ENCODE measurements at regions of chr5 and their contacts with region 1.

Region 1: DNA sequence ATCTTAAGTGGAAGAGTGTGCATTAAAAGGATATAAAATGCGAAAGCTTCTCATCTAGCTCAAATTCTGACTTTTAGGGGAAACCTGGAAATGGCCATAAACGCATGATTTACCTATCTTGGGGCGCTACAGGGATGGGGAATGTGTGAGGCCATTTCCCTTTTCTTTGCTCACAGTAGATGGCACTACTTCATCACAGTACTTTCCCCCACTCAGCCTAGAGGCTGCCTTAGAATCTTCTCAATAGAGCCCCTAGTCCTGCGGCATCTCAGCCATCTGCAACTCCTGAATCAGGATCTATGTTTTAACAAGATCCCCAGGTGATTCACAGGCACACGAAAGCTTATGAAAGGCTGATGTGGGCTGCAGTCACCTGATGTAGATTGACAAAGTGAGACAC is 110.8 kb downstream of the LHFPL2 start:
- DNase-seq: peak; percentile 25 to 60 (median 44)
- ATAC-seq: peak; percentile 90
- H3K4me3 ChIP-seq: no peak overlapping the region
- H3K27ac ChIP-seq: no peak overlapping the region
- H3K4me1 ChIP-seq: peaks cover 11 to 14% of the 10 kb centered on the region in 2 experiments; a peak in 4 of 5 replicates
- H3K27me3 ChIP-seq: no peaks in the 10 kb centered on the region
- CTCF ChIP-seq: peak; percentile 73 to 87 (median 80)
- EP300 ChIP-seq: no peak
- POLR2A ChIP-seq: no peak
- RAD21 ChIP-seq: peak; percentile 91 to 95

Region 2: DNA sequence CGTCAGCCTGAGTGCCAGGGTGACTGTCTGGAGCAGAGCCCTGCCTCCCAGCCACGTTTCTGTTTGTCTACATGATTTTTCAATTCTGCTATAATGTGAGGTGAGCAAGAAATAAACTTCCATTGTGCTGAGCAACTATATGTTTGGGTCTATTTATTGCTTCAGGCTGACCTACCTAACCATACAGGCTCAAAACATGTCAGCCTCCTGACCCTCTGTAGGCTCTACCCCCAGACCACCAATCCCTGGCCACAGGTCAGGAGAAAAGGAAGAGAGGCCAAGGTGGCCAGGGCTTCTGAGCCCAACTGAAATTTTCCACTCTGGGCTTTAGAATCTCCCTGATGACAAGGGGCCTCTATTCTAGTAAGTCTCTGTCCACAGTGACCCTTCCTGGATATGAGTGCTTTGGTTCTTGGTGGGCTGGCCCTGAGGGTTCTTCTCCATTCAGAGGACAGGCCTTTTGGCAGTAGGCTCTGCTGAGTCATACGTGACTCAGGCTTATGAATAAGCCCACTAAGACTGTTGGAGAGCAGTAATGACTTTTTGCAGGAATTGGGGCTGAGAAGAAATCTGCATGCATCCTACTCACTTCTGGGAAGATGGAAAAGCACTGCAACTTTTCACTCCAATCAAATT is 644.5 kb before region 1 on chr5:
- CTCF ChIA-PET with region 1: no interaction called
- POLR2A ChIA-PET with region 1: no interaction called
- in situ Hi-C with region 1: no loop called
- intact Hi-C with region 1: no loop called
- DNase-seq: peak; percentile 49 to 81 (median 65)
- ATAC-seq: peak; percentile 95
- H3K4me3 ChIP-seq: no peak overlapping the region
- H3K27ac ChIP-seq: peak overlapping the region; percentile 62; the same call in 2 of the 3 replicates
- H3K4me1 ChIP-seq: peaks cover 5 to 16% of the 10 kb centered on the region in 2 experiments; a peak in 4 of 5 replicates
- H3K27me3 ChIP-seq: no peaks in the 10 kb centered on the region; a peak in 1 of 5 replicates
- CTCF ChIP-seq: no peak
- EP300 ChIP-seq: no peak; the same call in 1 of the 2 replicates
- POLR2A ChIP-seq: no peak
- RAD21 ChIP-seq: no peak

Region 3: DNA sequence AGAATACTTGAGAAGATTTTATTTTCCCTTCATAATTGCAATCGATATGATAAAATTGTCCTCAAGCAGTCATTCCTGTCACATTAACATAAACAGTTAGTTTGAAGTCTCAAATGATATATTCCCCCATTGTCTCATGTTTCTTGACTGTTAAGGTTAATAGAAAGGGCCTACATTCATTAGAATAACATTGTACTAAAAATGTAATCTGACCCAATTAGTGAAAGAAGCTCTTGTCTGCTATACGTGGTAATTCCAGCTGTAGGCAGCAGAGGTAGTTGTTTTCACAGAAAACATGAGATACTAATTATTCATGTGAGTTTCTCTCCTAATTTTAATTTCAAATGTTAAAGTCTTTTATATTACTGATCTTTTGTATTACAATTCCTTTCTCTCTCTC is 217.4 kb before region 1 on chr5:
- CTCF ChIA-PET with region 1: interaction called, 4 read pairs
- POLR2A ChIA-PET with region 1: no interaction called
- in situ Hi-C with region 1: loop called (anchors 5 kb)
- intact Hi-C with region 1: loop called (anchors 5 kb)
- DNase-seq: peak in 2 of 4 experiments; percentile 25 to 42
- ATAC-seq: peak; percentile 67; the same call in 2 of the 3 replicates
- H3K4me3 ChIP-seq: no peak overlapping the region
- H3K27ac ChIP-seq: no peak overlapping the region
- H3K4me1 ChIP-seq: no peaks in the 10 kb centered on the region
- H3K27me3 ChIP-seq: no peaks in the 10 kb centered on the region
- CTCF ChIP-seq: peak; percentile 42 to 79 (median 45); a peak in 4 of 6 replicates
- EP300 ChIP-seq: no peak
- POLR2A ChIP-seq: no peak
- RAD21 ChIP-seq: peak; percentile 70 to 88

Region 4: GRCh38 chr5:78467752-78468357 is 70.0 kb before region 1 on chr5:
- CTCF ChIA-PET with region 1: no interaction called
- POLR2A ChIA-PET with region 1: no interaction called
- in situ Hi-C with region 1: no loop called
- intact Hi-C with region 1: loop called (anchors 1 kb)
- DNase-seq: peak; percentile 26 to 44 (median 39)
- ATAC-seq: peak; percentile 81
- H3K4me3 ChIP-seq: no peak overlapping the region
- H3K27ac ChIP-seq: no peak overlapping the region
- H3K4me1 ChIP-seq: peaks cover 0 to 5% of the 10 kb centered on the region in 2 experiments; a peak in 1 of 5 replicates
- H3K27me3 ChIP-seq: no peaks in the 10 kb centered on the region
- CTCF ChIP-seq: peak; percentile 60 to 80 (median 65)
- EP300 ChIP-seq: no peak
- POLR2A ChIP-seq: no peak
- RAD21 ChIP-seq: peak; percentile 73 to 84

Region 5: GRCh38 chr5:78627175-78627574 is 89.4 kb after region 1 on chr5:
- CTCF ChIA-PET with region 1: interaction called, 14 read pairs
- POLR2A ChIA-PET with region 1: interaction called, 3 read pairs
- in situ Hi-C with region 1: no loop called
- intact Hi-C with region 1: loop called (anchors 2 kb)
- DNase-seq: peak; percentile 22 to 37 (median 30)
- ATAC-seq: peak; percentile 71
- H3K4me3 ChIP-seq: no peak overlapping the region
- H3K27ac ChIP-seq: no peak overlapping the region
- H3K4me1 ChIP-seq: no peaks in the 10 kb centered on the region
- H3K27me3 ChIP-seq: no peaks in the 10 kb centered on the region
- CTCF ChIP-seq: peak; percentile 43 to 66 (median 57); a peak in 5 of 6 replicates
- EP300 ChIP-seq: no peak
- POLR2A ChIP-seq: no peak
- RAD21 ChIP-seq: peak; percentile 50 to 83

Region 6: GRCh38 chr5:78964887-78965286 is 427.1 kb after region 1 on chr5:
- CTCF ChIA-PET with region 1: interaction called, 6 read pairs
- POLR2A ChIA-PET with region 1: no interaction called
- in situ Hi-C with region 1: loop called (anchors 10 kb)
- intact Hi-C with region 1: loop called (anchors 2 kb)
- DNase-seq: peak in 1 of 4 experiments; percentile 47
- ATAC-seq: peak; percentile 74
- H3K4me3 ChIP-seq: no peak overlapping the region
- H3K27ac ChIP-seq: no peak overlapping the region
- H3K4me1 ChIP-seq: no peaks in the 10 kb centered on the region
- H3K27me3 ChIP-seq: no peaks in the 10 kb centered on the region
- CTCF ChIP-seq: peak; percentile 40 to 66 (median 50); a peak in 5 of 6 replicates
- EP300 ChIP-seq: no peak
- POLR2A ChIP-seq: no peak
- RAD21 ChIP-seq: peak; percentile 90 to 91

Measured in K562 (cell line).